Activated CD4-positive, alpha-beta memory T cell treated with anti-CD3 and anti-CD28 coated beads, Interleukin-2, amount 10 ng/mL, durations not matched to agents 7 days and 5 days (primary cell): ENCODE measurements at regions of chr7 and their contacts with region 1.

Region 1: GRCh38 chr7:37508118-37508517 is 59.5 kb upstream of the ELMO1 start:
- DNase-seq: no peak
- H3K4me3 Mint-ChIP-seq: no peak overlapping the region
- H3K27ac Mint-ChIP-seq: no peak overlapping the region
- H3K4me1 Mint-ChIP-seq: no peaks in the 10 kb centered on the region
- H3K27me3 Mint-ChIP-seq: peaks cover 37% of the 10 kb centered on the region

Region 2: DNA sequence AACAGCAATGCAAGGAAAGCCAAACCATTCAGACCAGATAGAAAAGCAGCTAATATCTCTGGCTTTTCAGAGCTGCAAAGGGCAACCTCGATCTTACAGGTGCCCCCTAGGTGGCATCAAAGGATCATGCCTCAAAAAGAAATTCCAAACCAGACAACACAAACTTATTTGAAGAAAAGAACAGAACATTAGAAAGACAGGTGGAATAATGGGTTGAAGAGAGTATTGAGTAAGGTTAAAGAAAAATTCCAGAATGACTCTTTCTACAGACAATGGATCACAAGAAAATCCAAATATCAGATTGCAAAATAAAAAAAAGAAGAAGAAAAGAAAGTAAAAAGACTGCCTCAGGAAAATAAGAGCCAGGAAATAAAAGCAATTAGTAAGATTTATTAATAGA is 273.2 kb before region 1 on chr7:
- CTCF ChIA-PET with region 1: interaction called, 13 read pairs
- POLR2A ChIA-PET with region 1: no interaction called
- DNase-seq: no peak
- H3K4me3 Mint-ChIP-seq: no peak overlapping the region
- H3K27ac Mint-ChIP-seq: no peak overlapping the region
- H3K4me1 Mint-ChIP-seq: peaks cover 11% of the 10 kb centered on the region
- H3K27me3 Mint-ChIP-seq: no peaks in the 10 kb centered on the region